ENCODE measurements at regions of chr7 and their contacts with region 1.

Region 1: GRCh38 chr7:14734839-14735321 is 167.7 kb downstream of the DGKB start:
- DNase-seq: no peak

Region 2: DNA sequence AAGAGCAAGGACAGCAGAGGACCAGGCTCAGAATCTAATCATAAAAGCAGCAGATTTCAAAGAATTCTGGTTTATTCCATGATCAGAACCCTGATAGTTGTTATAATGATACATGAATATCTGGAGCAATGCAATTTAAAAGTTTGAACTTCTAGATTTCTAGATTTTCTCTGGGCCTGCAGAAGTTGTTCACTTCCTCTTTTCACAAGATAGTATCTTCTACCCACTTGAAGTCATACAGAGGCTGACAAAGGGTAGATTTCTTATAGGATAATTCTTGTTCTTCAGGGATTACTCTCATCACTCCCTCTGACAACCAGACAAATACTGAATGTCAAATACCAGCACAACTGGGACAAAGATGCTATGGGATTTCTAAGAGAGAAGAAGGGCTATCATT is 425.4 kb before region 1 on chr7:
- in situ Hi-C with region 1: no loop called
- DNase-seq: peak; percentile 4

Region 3: DNA sequence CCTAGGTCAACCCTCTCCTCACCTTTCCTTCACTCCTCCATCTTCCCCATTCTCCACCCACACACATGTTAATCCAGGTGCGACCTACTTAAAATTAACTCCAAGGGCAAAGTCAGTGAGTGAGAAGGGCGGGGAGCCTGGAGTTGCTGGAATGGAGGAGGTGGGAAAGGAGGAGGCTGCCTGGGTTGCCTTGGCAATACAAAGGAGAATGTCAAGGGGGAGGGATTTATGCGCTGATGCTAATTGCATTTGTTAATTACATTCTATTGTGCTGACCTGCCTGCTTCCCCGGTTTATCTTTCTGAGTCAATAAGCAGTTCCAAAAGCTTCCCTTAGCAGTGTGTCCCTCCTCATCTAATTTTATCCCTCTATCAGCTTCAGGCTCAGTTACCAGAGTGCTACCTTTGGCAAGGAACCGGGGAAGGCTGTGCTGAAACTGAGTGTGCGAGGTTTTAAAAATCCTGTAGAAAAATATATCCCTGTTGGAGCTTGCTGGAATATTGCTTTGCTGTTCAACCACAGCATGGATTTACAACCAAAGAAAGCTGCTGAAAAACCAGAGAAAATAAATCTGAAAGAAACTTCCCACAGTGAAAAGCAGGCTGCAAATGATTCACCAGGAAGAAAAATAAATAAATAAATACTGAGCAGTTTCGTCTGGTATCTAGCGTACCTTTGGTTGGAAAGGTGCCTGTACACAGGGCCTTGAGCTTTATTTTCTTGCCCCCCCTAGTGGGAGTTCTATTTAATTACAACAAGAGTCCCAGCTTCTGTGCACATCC is 280.9 kb after region 1 on chr7:
- in situ Hi-C with region 1: loop called (anchors 25 kb)
- DNase-seq: peak; percentile 57

Region 4: GRCh38 chr7:15168489-15168888 is 433.6 kb after region 1 on chr7:
- in situ Hi-C with region 1: no loop called
- DNase-seq: peak; percentile 21